ENCODE measurements at regions of chr3 and their contacts with region 1.

Region 1: GRCh38 chr3:71725279-71725991 is at the start of gene EIF4E3:
- DNase-seq: peak; percentile 65
- ATAC-seq: peak; percentile 34
- H3K4me3 Mint-ChIP-seq: peak within 1 kb of the TSS; percentile 91
- H3K27ac Mint-ChIP-seq: peak within 1 kb of the TSS; percentile 95
- H3K4me1 Mint-ChIP-seq: peaks cover 67% of the 10 kb centered on the region
- H3K27me3 Mint-ChIP-seq: no peaks in the 10 kb centered on the region
- total RNA-seq, gene EIF4E3: 28.7 to 29.7 TPM

Region 2: DNA sequence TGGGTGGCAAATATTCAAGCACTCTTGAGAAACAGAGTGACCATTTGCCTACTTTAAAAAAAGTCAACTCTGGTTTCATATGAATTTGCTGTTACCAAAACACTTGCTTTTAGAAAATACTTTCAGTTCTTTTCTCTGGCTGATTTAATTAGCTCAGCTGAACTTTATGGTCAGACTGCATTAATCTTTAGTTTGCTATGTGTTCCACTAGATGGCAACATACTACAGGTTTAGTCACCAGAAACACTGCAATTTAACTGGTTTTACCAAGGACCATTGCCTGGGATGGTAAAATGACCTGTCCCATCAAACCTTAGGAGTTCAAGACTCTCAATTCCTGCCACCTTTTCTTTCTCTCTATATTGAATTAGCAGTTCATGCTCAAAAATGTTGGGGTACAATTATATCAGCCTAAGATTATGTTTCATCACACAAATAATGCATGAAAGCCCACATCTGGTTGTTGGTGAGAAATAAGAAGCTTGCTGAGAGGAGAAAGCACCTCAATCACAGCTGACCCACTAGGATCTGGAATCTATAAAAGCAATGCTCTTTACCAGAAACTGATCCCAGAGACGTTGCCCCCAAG is 14.4 kb before region 1 on chr3:
- CTCF ChIA-PET with region 1: interaction called, 28 read pairs
- POLR2A ChIA-PET with region 1: no interaction called
- intact Hi-C with region 1: loop called in 1 of 2 experiments (anchors 2 kb)
- DNase-seq: no peak
- ATAC-seq: peak; percentile 81
- H3K4me3 Mint-ChIP-seq: no peak overlapping the region
- H3K27ac Mint-ChIP-seq: peak overlapping the region; percentile 51
- H3K4me1 Mint-ChIP-seq: peaks cover 74% of the 10 kb centered on the region
- H3K27me3 Mint-ChIP-seq: no peaks in the 10 kb centered on the region

Region 3: DNA sequence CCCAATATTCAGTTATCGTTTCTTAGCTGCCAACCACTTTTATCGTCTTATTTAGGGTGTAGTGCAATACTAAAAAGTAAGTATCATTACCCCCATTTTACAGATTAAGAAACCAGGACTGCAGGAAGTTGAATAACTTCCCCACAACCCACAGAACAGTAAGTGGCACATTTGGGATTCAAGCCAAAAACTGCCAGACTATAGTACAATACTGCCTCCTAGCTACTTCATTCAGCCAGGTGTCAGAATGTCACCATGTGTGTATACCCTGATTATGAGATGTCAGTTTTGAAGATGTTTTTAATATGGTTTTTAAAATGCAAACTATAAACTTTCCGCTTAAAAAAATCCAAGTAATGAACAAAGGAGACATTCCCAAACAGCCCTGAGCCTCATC is 133.7 kb after region 1 on chr3:
- CTCF ChIA-PET with region 1: interaction called, 23 read pairs
- POLR2A ChIA-PET with region 1: no interaction called
- intact Hi-C with region 1: loop called (anchors 1 kb)
- DNase-seq: peak; percentile 22
- ATAC-seq: peak; percentile 91
- H3K4me3 Mint-ChIP-seq: no peak overlapping the region
- H3K27ac Mint-ChIP-seq: no peak overlapping the region
- H3K4me1 Mint-ChIP-seq: peaks cover 10% of the 10 kb centered on the region
- H3K27me3 Mint-ChIP-seq: peaks cover 11% of the 10 kb centered on the region

Region 4: GRCh38 chr3:71978150-71978721 is 252.8 kb after region 1 on chr3:
- CTCF ChIA-PET with region 1: no interaction called
- POLR2A ChIA-PET with region 1: interaction called, 3 read pairs
- intact Hi-C with region 1: loop called in 1 of 2 experiments (anchors 2 kb)
- DNase-seq: peak; percentile 67
- ATAC-seq: peak; percentile 87
- H3K4me3 Mint-ChIP-seq: peak overlapping the region; percentile 44
- H3K27ac Mint-ChIP-seq: peak overlapping the region; percentile 81
- H3K4me1 Mint-ChIP-seq: peaks cover 47% of the 10 kb centered on the region
- H3K27me3 Mint-ChIP-seq: peaks cover 13% of the 10 kb centered on the region

Region 5: GRCh38 chr3:71989165-71989564 is 263.7 kb after region 1 on chr3:
- CTCF ChIA-PET with region 1: no interaction called
- POLR2A ChIA-PET with region 1: no interaction called
- intact Hi-C with region 1: no loop called
- DNase-seq: no peak
- ATAC-seq: no peak
- H3K4me3 Mint-ChIP-seq: no peak overlapping the region
- H3K27ac Mint-ChIP-seq: no peak overlapping the region
- H3K4me1 Mint-ChIP-seq: peaks cover 21% of the 10 kb centered on the region
- H3K27me3 Mint-ChIP-seq: peaks cover 2% of the 10 kb centered on the region

Region 6: GRCh38 chr3:72447059-72447946 is 721.9 kb after region 1 on chr3:
- CTCF ChIA-PET with region 1: no interaction called
- POLR2A ChIA-PET with region 1: no interaction called
- intact Hi-C with region 1: loop called in 1 of 2 experiments (anchors 5 kb)
- DNase-seq: peak; percentile 96
- ATAC-seq: peak; percentile 87
- H3K4me3 Mint-ChIP-seq: peak overlapping the region; percentile 43
- H3K27ac Mint-ChIP-seq: peak overlapping the region; percentile 63
- H3K4me1 Mint-ChIP-seq: peaks cover 38% of the 10 kb centered on the region
- H3K27me3 Mint-ChIP-seq: peaks cover 13% of the 10 kb centered on the region

Region 7: GRCh38 chr3:72996473-72997333 is 1271.3 kb after region 1 on chr3 and contains the start of gene PPP4R2:
- CTCF ChIA-PET with region 1: no interaction called
- POLR2A ChIA-PET with region 1: no interaction called
- intact Hi-C with region 1: loop called in 1 of 2 experiments (anchors 10 kb)
- DNase-seq: peak; percentile 94
- ATAC-seq: peak; percentile 88
- H3K4me3 Mint-ChIP-seq: peak within 1 kb of the TSS; percentile 85
- H3K27ac Mint-ChIP-seq: peak within 1 kb of the TSS; percentile 93
- H3K4me1 Mint-ChIP-seq: peaks cover 35% of the 10 kb centered on the region
- H3K27me3 Mint-ChIP-seq: no peaks in the 10 kb centered on the region
- total RNA-seq, gene PPP4R2: 75.1 to 91.5 TPM